Activated CD4-positive, alpha-beta memory T cell treated with anti-CD3 and anti-CD28 coated beads for 36 hours (primary cell): ENCODE measurements at regions of chr17 and their contacts with region 1.

Region 1: DNA sequence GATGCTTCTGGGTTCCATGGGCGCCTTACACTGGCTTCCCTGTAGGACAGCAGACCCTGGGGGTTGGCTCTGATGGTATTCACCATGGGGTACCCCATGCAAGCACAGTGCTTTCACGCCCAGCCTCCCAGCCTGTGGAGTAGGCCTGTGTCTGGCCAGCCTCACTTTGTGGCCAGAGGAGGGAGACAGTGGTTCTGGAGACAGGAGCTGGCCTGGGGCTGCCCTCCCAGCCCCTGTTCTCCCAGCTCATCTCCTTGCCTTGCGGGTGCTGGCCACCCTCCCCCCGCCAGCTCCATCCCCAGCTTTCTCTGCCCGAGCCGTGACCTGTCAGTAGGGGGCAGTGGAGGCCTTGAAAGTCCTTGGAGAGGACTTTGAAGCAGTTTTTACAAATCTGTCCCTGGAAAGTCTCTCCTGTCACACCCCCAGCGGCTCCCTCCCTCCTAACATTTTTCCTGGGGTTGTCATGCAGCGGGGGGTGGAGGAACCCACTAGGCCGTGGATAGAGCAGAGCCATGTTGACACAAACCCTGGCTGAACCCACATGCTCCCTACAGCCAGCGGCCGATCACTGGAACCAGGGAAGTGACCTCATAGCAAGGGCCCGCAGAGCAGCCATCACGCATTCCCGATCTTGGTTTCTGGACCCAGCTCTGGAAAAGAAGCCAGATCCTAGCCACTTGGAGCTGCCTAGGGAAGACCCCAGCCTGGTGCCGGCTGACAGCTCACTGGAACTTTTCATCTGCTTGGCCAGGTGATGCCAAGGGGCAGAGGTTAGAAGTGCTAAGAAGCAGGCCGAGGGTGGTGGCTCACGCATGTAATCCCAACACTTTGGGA is 289.4 kb downstream of the SEC14L1 start:
- DNase-seq: peak; percentile 90
- H3K4me3 Mint-ChIP-seq: no peak overlapping the region
- H3K27ac Mint-ChIP-seq: no peak overlapping the region
- H3K4me1 Mint-ChIP-seq: peaks cover 83% of the 10 kb centered on the region
- H3K27me3 Mint-ChIP-seq: no peaks in the 10 kb centered on the region

Region 2: GRCh38 chr17:77247048-77247541 is 183.0 kb before region 1 on chr17:
- CTCF ChIA-PET with region 1: no interaction called
- POLR2A ChIA-PET with region 1: no interaction called
- intact Hi-C with region 1: no loop called
- DNase-seq: peak; percentile 88
- H3K4me3 Mint-ChIP-seq: peak overlapping the region; percentile 50
- H3K27ac Mint-ChIP-seq: no peak overlapping the region
- H3K4me1 Mint-ChIP-seq: peaks cover 9% of the 10 kb centered on the region
- H3K27me3 Mint-ChIP-seq: peaks cover 14% of the 10 kb centered on the region

Region 3: DNA sequence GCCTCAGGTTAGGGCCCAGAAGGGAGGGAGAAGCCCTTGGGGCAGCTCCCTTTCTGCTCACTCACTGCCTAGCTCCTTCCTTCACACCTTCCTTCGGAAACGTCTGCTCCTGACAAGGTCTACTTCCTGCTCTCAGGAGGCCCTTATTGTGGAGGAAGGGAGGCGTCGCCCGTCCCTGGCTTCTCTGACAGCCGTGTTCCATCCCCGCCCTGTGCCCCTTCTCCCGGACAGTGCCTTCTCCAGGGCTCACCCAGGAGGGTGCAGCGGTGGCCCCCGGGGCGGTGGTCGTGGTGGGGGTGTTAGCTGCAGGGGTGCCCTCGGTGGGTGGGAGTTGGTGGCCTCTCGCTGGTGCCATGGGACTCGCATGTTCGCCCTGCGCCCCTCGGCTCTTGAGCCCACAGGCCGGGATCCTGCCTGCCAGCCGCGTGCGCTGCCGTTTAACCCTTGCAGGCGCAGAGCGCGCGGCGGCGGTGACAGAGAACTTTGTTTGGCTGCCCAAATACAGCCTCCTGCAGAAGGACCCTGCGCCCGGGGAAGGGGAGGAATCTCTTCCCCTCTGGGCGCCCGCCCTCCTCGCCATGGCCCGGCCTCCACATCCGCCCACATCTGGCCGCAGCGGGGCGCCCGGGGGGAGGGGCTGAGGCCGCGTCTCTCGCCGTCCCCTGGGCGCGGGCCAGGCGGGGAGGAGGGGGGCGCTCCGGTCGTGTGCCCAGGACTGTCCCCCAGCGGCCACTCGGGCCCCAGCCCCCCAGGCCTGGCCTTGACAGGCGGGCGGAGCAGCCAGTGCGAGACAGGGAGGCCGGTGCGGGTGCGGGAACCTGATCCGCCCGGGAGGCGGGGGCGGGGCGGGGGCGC is 57.5 kb before region 1 on chr17:
- CTCF ChIA-PET with region 1: interaction called, 17 read pairs
- POLR2A ChIA-PET with region 1: no interaction called
- intact Hi-C with region 1: no loop called
- DNase-seq: peak; percentile 75
- H3K4me3 Mint-ChIP-seq: peak overlapping the region; percentile 73
- H3K27ac Mint-ChIP-seq: peak overlapping the region; percentile 73
- H3K4me1 Mint-ChIP-seq: peaks cover 62% of the 10 kb centered on the region
- H3K27me3 Mint-ChIP-seq: no peaks in the 10 kb centered on the region

Region 4: DNA sequence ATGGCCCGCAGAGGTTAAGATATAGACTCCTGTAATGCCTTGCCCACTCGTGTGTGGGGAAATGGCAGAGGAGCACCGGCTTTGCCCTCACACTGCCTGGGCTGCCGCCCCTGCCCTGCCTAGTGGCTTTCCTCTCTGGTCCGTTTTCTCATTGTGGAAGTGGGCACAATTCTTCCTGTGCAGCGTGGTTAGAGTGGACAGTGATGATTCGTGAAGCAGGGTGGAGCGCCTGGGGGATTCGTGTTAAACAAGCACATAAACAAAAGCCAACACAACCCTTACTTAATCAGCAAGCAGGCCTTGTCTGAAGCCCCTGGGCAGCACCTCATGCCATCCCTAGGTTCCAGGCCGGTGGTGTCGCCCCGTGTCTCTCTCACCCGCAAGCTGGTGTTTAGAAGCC is 19.7 kb before region 1 on chr17:
- CTCF ChIA-PET with region 1: interaction called, 140 read pairs
- POLR2A ChIA-PET with region 1: interaction called, 3 read pairs
- intact Hi-C with region 1: no loop called
- DNase-seq: no peak
- H3K4me3 Mint-ChIP-seq: no peak overlapping the region
- H3K27ac Mint-ChIP-seq: peak overlapping the region; percentile 53
- H3K4me1 Mint-ChIP-seq: peaks cover 67% of the 10 kb centered on the region
- H3K27me3 Mint-ChIP-seq: no peaks in the 10 kb centered on the region

Region 5: DNA sequence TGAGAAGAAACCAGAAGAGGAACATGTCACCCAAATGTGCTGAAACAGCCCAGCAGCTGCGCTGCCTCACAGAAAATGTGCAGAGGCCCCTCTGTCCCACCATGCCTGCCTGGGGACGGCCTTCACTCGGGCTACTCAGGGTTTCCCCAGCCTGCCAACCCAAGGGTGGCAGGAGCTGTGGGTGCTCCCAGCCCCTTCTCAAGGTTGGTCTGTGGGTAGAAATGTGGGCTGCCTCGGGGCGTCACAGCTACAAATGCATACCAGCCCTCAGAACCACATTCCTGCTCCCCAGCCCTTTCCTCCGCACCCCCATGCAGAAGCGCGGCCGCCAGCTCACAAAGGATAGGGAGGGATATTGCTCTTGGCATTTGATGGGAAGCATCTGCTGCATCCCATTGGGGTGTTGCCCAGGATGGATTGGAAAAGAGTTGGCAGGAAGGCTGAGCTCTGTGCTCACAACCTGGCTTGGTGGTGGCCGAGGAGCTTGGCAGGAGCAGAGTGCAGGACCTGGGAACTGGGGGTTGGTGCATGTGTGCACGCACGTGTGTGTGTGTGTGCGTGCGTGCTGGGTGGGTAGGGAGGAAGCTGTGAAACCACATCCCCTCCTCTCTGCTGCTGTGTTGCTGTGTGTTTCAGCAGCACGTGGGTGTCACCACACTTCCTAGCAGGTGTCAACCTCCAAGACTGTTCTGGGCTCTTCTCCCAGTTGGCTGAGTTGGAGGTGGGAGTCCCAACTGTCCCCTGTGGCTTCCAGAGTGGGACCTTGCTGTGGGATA is 15.0 kb after region 1 on chr17:
- CTCF ChIA-PET with region 1: interaction called, 68 read pairs
- POLR2A ChIA-PET with region 1: interaction called, 19 read pairs
- intact Hi-C with region 1: no loop called
- DNase-seq: peak; percentile 91
- H3K4me3 Mint-ChIP-seq: peak overlapping the region; percentile 72
- H3K27ac Mint-ChIP-seq: peak overlapping the region; percentile 98
- H3K4me1 Mint-ChIP-seq: peaks cover 91% of the 10 kb centered on the region
- H3K27me3 Mint-ChIP-seq: no peaks in the 10 kb centered on the region

Region 6: DNA sequence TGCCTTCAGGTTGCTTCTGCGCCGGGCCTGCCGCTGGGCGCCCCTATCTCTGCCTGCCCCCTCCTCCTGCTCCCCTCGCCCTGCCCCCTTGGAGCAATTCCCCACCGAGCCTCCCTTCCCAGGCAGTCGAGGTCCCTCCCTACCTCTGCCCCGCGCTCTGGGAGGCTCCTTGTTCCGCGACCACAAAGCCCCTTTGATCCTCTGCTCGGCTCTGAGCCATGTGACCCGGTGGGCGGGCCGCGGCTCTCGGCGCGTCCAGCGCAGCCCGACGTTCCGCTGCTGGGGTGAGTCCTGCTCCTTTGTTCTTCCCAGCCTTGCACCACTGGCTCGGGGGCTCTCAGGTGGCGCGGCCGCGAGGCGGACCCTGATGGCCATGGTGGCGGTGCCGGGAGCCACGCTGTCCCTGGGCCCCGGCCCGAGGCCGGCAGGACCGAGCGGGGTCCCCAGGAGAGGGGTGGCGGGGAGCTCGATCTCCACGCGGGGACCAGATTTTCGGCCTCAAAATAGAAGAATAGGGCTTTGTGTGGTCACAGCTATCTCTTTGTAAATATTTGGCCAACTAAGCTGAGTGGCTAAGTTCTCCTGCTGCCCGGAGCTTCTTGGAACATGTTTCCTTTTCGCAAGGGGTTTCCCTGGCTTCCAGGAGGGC is 21.2 kb after region 1 on chr17:
- CTCF ChIA-PET with region 1: interaction called, 45 read pairs
- POLR2A ChIA-PET with region 1: interaction called, 8 read pairs
- intact Hi-C with region 1: no loop called
- DNase-seq: peak; percentile 83
- H3K4me3 Mint-ChIP-seq: peak overlapping the region; percentile 91
- H3K27ac Mint-ChIP-seq: peak overlapping the region; percentile 100
- H3K4me1 Mint-ChIP-seq: peaks cover 41% of the 10 kb centered on the region
- H3K27me3 Mint-ChIP-seq: no peaks in the 10 kb centered on the region

Region 7: GRCh38 chr17:77476931-77477877 is 47.1 kb after region 1 on chr17:
- CTCF ChIA-PET with region 1: interaction called, 60 read pairs
- POLR2A ChIA-PET with region 1: interaction called, 4 read pairs
- intact Hi-C with region 1: no loop called
- DNase-seq: peak; percentile 63
- H3K4me3 Mint-ChIP-seq: no peak overlapping the region
- H3K27ac Mint-ChIP-seq: peak overlapping the region; percentile 66
- H3K4me1 Mint-ChIP-seq: peaks cover 75% of the 10 kb centered on the region
- H3K27me3 Mint-ChIP-seq: no peaks in the 10 kb centered on the region

Region 8: GRCh38 chr17:77501101-77501566 is 71.0 kb after region 1 on chr17:
- CTCF ChIA-PET with region 1: interaction called, 209 read pairs
- POLR2A ChIA-PET with region 1: no interaction called
- intact Hi-C with region 1: no loop called
- DNase-seq: peak; percentile 52
- H3K4me3 Mint-ChIP-seq: no peak overlapping the region
- H3K27ac Mint-ChIP-seq: peak overlapping the region; percentile 34
- H3K4me1 Mint-ChIP-seq: no peaks in the 10 kb centered on the region
- H3K27me3 Mint-ChIP-seq: no peaks in the 10 kb centered on the region